Right cardiac atrium (tissue), 5 donors: ENCODE measurements at regions of chr11 and their contacts with region 1.

Region 1: DNA sequence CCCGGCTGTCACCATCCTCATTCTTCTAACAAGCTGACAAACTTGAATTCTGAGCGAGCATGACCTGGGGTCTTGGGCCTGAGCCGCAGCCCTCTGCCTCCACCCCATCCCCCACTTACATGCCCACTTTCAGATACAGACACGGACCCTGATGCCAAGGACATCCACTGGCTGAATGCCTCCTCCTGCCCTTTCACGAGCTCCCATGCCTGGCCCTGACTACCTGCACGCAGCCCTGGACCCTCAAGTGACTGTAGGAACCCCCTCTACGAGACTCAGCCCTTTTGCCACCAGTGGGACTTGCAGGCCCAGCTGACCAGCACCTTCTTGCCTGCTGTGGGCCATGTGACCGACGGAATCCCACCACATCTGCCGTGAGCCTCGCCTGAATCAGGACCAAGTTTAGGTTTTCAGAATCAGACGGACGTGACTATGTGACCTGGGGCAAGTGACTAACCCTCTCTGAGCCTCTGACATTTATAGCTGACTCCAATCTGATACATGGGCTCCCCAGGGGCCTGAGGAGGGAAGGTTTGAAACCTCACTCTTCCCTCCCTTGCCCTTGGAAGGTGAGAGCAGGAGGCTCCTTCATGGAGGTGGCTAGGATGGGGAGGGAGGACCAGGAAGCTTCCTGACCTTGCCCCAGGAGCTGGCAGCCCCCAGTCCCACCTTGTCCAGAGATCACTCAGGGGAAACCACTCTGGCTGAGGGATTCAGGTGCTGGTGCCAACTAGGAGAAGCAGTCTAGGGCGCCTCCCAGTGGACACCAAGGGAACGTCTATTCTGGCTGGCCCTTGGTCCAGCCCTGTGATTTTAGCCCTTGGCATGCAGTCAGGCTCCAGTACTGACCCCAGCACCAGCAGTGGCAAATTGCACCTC is 46.9 kb upstream of the SYT7 start:
- DNase-seq: peak; percentile 67 to 86 (median 80)
- ATAC-seq: peak; percentile 70 to 83
- H3K4me3 ChIP-seq: no peak overlapping the region
- H3K27ac ChIP-seq: peak overlapping the region; percentile 96
- H3K4me1 ChIP-seq: no peaks in the 10 kb centered on the region
- H3K27me3 ChIP-seq: no peaks in the 10 kb centered on the region

Region 2: GRCh38 chr11:61532139-61533038 is 95.4 kb before region 1 on chr11:
- intact Hi-C with region 1: loop called in 1 of 4 experiments (anchors 5 kb)
- DNase-seq: no peak
- ATAC-seq: no peak
- H3K4me3 ChIP-seq: no peak overlapping the region
- H3K27ac ChIP-seq: no peak overlapping the region
- H3K4me1 ChIP-seq: peaks cover 2% of the 10 kb centered on the region
- H3K27me3 ChIP-seq: no peaks in the 10 kb centered on the region

Region 3: GRCh38 chr11:61581030-61581928 is 46.5 kb before region 1 on chr11 and contains the start of gene SYT7:
- intact Hi-C with region 1: loop called in 3 of 4 experiments (anchors 2 to 5 kb)
- DNase-seq: peak; percentile 94 to 98 (median 97)
- ATAC-seq: peak; percentile 84 to 86
- H3K4me3 ChIP-seq: peak within 1 kb of the TSS; percentile 91
- H3K27ac ChIP-seq: peak within 1 kb of the TSS; percentile 84
- H3K4me1 ChIP-seq: no peaks in the 10 kb centered on the region
- H3K27me3 ChIP-seq: no peaks in the 10 kb centered on the region
- total RNA-seq, gene SYT7: 17.4 to 48.3 (median 43.5) TPM